Calu3 (cell line): ENCODE measurements at regions of chr7 and their contacts with region 1.

Region 1: DNA sequence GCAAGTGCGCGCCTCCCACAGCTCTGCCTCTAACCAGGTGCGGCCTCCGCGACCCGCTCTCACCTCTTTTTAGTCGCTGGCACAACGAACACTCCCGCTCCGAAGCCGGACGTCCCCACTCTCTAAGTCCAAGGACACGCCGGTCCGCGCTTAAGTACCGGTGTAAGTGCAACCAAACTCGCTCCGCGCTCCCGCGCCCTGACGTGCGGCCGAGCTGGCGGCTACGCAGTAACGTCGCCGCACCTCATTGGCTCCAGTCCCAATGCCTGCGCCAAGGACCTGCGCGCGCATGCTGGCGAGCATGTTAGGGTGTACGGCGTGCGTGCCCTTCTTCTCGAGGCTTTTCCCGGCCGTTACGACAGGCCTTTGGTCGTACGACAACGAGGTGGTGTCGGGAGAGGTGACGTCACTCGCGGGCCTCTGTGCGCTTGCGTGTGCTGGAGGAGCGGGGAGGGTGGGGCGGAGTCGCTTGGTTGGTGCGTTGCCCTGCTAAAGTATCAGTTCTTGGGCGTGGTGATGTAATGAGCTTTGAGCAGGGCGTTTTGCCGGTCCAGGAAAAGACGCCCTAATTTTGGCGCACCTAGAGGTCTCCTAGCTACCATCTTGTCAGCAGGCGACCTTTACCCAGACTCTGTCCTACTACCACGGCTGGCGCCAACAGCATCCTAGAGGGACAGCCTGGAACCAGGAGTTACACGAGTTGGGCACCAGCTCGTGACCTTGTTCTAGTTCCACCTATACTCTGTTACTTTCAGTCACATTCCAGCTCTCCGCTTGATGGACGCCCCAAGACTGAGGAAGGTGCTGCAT is at the start of gene CYCS:
- DNase-seq: peak; percentile 100
- H3K4me3 Mint-ChIP-seq: peak within 1 kb of the TSS; percentile 87
- H3K27ac Mint-ChIP-seq: peak within 1 kb of the TSS; percentile 98
- H3K4me1 Mint-ChIP-seq: peaks cover 7% of the 10 kb centered on the region
- H3K27me3 Mint-ChIP-seq: peaks cover 23% of the 10 kb centered on the region
- CTCF ChIP-seq: no peak
- total RNA-seq, gene CYCS: 258 and 276 TPM in 2 replicates

Region 2: GRCh38 chr7:24697416-24697815 is 427.9 kb before region 1 on chr7:
- CTCF ChIA-PET with region 1: no interaction called
- intact Hi-C with region 1: no loop called
- DNase-seq: no peak
- H3K4me3 Mint-ChIP-seq: no peak overlapping the region
- H3K27ac Mint-ChIP-seq: no peak overlapping the region
- H3K4me1 Mint-ChIP-seq: peaks cover 14% of the 10 kb centered on the region
- H3K27me3 Mint-ChIP-seq: no peaks in the 10 kb centered on the region
- CTCF ChIP-seq: no peak

Region 3: DNA sequence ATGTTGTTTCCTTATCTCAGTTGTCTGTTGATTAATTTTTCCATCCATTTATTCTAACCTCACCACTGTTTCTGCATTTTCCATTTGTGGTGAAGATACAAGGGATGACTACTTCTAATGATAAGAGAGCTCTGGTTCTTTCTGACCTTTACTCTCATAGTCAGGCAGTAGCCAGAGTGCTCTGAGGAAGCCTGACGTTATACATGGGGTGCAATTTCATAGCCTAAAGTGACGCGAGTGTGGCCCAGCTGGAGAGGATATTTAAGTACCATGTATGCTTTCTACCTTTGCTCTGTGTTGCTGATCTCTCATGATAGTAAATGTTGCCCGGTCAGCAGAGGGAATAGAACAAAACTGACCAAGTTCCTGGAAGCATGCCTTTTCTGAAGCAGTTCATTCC is 33.6 kb after region 1 on chr7:
- CTCF ChIA-PET with region 1: no interaction called
- intact Hi-C with region 1: loop called (anchors 1 kb)
- DNase-seq: no peak
- H3K4me3 Mint-ChIP-seq: no peak overlapping the region
- H3K27ac Mint-ChIP-seq: no peak overlapping the region
- H3K4me1 Mint-ChIP-seq: no peaks in the 10 kb centered on the region
- H3K27me3 Mint-ChIP-seq: no peaks in the 10 kb centered on the region
- CTCF ChIP-seq: no peak

Region 4: DNA sequence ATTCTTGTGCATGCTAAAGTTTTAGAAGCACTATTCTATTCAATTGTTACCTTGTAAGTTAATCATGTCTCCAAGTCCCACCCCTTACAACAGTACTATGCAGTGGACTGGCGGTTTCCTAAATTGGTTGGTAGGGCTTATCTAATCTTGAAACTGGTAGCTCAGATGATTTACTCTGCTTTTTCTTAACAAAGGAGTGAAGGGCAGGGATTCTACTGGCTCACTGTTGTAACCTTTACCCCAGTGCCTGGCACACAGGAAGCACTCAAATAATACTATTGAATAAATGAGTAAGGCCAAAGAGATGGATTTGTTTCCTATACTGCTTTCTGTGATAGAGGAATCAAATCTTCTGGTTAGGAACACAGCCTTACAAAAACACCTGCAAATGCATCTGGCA is 45.7 kb after region 1 on chr7:
- CTCF ChIA-PET with region 1: no interaction called
- intact Hi-C with region 1: no loop called
- DNase-seq: no peak
- H3K4me3 Mint-ChIP-seq: no peak overlapping the region
- H3K27ac Mint-ChIP-seq: no peak overlapping the region
- H3K4me1 Mint-ChIP-seq: peaks cover 39% of the 10 kb centered on the region
- H3K27me3 Mint-ChIP-seq: no peaks in the 10 kb centered on the region
- CTCF ChIP-seq: no peak

Region 5: DNA sequence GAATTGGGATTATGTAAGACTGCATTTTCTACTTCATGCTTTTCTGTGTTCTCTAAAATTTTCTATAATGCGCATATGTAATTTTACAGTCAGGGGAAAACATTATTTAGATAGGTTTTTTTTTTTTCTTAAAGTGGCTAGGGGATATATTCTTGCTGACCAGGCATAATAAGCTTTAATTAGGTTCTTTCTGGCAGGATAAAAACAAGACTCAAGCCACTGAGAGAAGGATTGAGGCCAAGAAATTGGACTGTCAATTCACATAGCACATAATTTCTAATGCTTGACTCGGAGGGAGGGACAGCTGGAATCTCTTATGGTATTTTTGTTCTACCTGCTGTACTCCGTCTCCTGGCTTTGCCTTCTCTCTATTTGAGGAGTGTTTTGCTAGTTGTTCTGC is 222.8 kb after region 1 on chr7:
- CTCF ChIA-PET with region 1: no interaction called
- intact Hi-C with region 1: no loop called
- DNase-seq: no peak
- H3K4me3 Mint-ChIP-seq: no peak overlapping the region
- H3K27ac Mint-ChIP-seq: no peak overlapping the region
- H3K4me1 Mint-ChIP-seq: peaks cover 11% of the 10 kb centered on the region
- H3K27me3 Mint-ChIP-seq: peaks cover 8% of the 10 kb centered on the region
- CTCF ChIP-seq: no peak